ENCODE measurements at regions of chr21 and their contacts with region 1.

Region 1: DNA sequence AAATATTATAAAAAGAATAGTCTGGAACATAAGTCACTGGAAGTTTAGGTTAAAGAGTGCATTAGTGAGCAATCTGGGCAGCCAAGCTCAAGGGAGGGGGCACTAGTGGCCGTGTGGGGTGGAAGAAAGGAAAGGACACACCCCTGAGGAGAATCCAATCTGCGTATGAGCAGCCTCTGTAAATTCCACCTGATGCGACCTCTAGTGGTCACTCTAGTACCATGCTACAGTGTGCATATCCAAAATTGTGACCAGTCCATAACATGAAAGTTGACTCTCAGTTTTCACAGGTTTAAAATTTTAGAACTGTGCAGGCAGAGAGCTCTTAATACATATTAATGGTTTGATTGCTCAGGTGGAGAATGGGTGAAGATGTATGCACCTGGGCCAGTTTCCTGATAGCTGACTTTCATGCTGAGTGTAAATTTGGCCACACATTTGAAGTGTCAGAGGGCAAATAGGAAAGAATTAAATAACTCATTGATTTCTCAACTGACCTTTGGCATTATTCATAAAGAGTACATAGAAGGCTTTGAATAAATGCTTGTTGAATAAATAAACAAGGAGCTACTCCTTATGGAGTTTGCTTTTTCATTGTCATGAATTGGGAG is 105.9 kb upstream of the C21orf91 start:
- DNase-seq: peak; percentile 41 to 50
- H3K4me3 ChIP-seq: no peak overlapping the region
- H3K27ac ChIP-seq: no peak overlapping the region
- H3K4me1 ChIP-seq: no peaks in the 10 kb centered on the region
- H3K27me3 ChIP-seq: no peaks in the 10 kb centered on the region
- CTCF ChIP-seq: peak; percentile 76

Region 2: DNA sequence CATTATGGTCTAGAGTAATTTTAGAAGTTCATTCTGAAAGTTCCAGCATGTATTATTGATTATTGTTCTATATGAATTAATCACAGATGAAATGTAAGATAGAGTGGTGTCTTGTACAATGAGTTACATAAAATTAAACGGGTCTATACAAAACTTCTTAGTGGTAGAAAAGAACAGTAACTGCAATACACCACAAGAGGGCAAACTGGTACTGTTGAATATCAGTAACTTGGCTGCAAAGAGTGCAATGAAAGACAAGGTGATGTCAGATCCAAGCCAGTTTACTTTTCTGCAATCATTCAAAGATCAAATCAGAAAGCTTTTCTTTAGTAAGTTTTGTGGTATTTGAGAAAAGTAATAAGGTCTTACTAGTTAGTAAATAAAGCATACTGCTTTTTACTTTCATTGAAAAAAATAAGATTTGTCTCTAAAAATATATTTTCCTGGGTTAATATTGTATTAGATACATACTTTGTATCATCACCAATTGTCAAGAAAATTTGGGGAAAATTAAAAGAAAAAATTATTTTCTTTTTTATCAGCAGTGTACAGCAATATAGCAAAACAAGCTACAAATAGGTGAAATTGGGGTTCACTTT is 246.0 kb before region 1 on chr21:
- CTCF ChIA-PET with region 1: interaction called, 10 read pairs
- POLR2A ChIA-PET with region 1: no interaction called
- intact Hi-C with region 1: loop called (anchors 2 kb)
- DNase-seq: peak in 1 of 2 experiments; percentile 39
- H3K4me3 ChIP-seq: no peak overlapping the region
- H3K27ac ChIP-seq: no peak overlapping the region
- H3K4me1 ChIP-seq: no peaks in the 10 kb centered on the region
- H3K27me3 ChIP-seq: no peaks in the 10 kb centered on the region
- CTCF ChIP-seq: peak; percentile 87

Region 3: DNA sequence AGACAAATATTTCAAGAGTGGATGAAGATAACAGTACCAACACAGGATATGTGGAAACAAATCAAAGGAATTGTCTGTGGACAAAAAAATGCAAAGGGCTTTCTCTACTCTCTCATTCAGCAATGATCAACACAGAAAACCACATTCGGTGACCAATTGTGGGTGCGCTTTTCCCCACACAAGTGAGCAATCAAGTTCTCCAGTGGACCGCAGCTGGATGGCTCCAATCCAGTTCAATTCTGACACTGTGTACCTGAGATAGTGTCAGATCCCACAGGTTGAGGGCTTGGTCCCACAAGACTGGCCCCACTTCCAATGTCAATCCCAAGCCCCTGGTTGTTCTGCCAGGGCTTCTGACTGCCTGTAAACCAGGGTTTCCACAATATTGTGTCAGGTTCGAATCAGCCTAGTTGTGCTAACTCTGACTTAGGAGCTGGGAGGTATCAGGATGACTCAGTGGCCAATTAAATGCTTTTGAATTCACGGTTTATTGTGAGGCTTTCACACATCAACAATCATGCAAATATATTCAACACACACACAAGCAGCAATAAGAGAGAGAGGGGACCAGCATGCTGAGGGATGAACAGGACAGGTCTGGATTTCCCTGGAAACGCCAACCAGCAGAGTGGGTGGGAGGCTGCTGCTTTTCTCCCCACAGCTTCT is 225.4 kb before region 1 on chr21:
- CTCF ChIA-PET with region 1: interaction called, 18 read pairs
- POLR2A ChIA-PET with region 1: no interaction called
- intact Hi-C with region 1: no loop called
- DNase-seq: no peak
- H3K4me3 ChIP-seq: no peak overlapping the region
- H3K27ac ChIP-seq: no peak overlapping the region
- H3K4me1 ChIP-seq: no peaks in the 10 kb centered on the region
- H3K27me3 ChIP-seq: no peaks in the 10 kb centered on the region
- CTCF ChIP-seq: no peak

Region 4: DNA sequence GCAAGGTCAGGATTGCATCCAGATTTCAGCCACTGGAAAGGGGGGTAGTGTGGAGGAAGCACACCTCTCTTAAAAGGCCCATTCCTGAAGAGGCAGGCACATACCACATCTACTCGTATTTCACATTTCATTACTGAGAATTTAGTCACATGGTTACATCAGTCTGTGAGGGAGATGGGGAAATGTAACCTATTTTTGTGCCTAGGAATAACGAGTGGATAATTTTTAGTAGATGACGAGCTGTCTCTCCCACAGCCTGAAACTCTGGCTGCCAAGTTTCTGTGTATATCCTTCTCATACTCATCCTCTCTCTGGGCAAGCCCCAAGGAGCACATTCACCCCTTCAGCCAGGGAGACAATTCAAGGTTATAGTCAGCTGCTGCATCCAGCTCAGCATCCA is 95.6 kb before region 1 on chr21:
- CTCF ChIA-PET with region 1: no interaction called
- POLR2A ChIA-PET with region 1: no interaction called
- intact Hi-C with region 1: no loop called
- DNase-seq: no peak
- H3K4me3 ChIP-seq: no peak overlapping the region
- H3K27ac ChIP-seq: no peak overlapping the region
- H3K4me1 ChIP-seq: no peaks in the 10 kb centered on the region
- H3K27me3 ChIP-seq: no peaks in the 10 kb centered on the region
- CTCF ChIP-seq: no peak

Region 5: GRCh38 chr21:17947531-17947930 is 22.4 kb after region 1 on chr21:
- CTCF ChIA-PET with region 1: no interaction called
- POLR2A ChIA-PET with region 1: no interaction called
- intact Hi-C with region 1: no loop called
- DNase-seq: no peak
- H3K4me3 ChIP-seq: no peak overlapping the region
- H3K27ac ChIP-seq: no peak overlapping the region
- H3K4me1 ChIP-seq: no peaks in the 10 kb centered on the region
- H3K27me3 ChIP-seq: no peaks in the 10 kb centered on the region
- CTCF ChIP-seq: no peak

Region 6: DNA sequence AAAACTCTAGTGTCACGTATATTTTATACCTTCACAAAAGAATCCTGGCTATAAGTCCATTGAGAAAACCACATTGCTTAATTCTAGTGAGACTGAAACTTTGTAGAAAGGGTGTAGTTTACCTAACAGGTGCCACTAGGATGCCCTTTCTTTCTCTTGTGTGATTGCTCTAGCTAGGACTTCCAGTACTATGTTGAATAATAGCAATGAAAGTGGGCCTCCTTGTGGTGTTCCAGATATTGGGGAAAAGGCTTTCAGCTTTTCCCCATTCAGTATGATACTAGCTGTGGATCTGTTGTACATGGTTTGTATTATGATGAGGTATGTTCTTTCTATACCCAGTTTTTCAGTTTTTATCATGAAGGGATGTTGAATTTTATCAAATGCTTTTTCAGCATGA is 279.8 kb after region 1 on chr21:
- CTCF ChIA-PET with region 1: no interaction called
- POLR2A ChIA-PET with region 1: interaction called, 10 read pairs
- intact Hi-C with region 1: no loop called
- DNase-seq: no peak
- H3K4me3 ChIP-seq: no peak overlapping the region
- H3K27ac ChIP-seq: no peak overlapping the region
- H3K4me1 ChIP-seq: no peaks in the 10 kb centered on the region
- H3K27me3 ChIP-seq: no peaks in the 10 kb centered on the region
- CTCF ChIP-seq: no peak

Region 7: GRCh38 chr21:18294100-18294499 is 369.0 kb after region 1 on chr21:
- CTCF ChIA-PET with region 1: no interaction called
- POLR2A ChIA-PET with region 1: no interaction called
- intact Hi-C with region 1: loop called (anchors 10 kb)
- DNase-seq: no peak
- H3K4me3 ChIP-seq: no peak overlapping the region
- H3K27ac ChIP-seq: no peak overlapping the region
- H3K4me1 ChIP-seq: no peaks in the 10 kb centered on the region
- H3K27me3 ChIP-seq: no peaks in the 10 kb centered on the region
- CTCF ChIP-seq: no peak